ENCODE measurements at regions of chr9 and their contacts with region 1.

Region 1: DNA sequence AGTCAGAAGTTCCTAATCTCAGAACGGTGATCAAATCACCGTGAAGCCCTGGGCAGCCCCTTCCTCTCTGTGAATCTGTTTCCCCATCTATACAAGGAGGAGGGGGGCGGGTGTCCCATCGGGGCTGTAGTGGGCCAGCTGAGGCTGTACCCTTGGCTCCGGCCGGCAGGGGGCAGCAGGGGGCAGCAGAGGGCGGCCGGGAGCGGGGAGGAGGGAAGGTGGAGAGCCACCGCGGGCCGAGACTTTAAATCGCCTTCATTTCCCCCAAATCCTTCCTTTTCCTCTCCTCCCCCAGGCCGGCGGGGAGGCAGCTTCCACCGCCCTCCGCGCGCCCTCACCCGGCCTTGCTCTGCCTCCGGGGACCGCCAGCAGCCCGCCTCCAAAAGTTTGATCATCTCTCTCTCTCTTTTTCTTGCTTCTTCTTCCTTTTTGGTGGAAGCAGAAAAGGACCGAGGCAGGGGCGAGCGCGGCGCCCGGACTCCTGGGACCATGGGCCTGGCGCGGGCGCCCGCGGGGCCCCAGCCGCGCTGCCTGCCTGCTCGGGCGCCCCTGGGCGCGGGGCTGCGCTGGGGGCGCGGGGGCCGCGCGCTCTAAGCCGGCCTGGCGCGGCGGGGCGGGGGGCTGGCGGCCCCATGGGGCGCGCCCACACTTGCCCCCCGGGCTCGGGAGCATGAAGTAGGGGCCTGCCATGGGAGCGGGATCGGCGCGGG is at the start of gene COL27A1:
- DNase-seq: peak; percentile 71
- H3K4me3 Mint-ChIP-seq: peak within 1 kb of the TSS; percentile 87
- H3K27ac Mint-ChIP-seq: peak within 1 kb of the TSS; percentile 74
- H3K4me1 Mint-ChIP-seq: peaks cover 16% of the 10 kb centered on the region
- H3K27me3 Mint-ChIP-seq: peaks cover 49% of the 10 kb centered on the region
- total RNA-seq, gene COL27A1: 6.1 and 7.4 TPM in 2 replicates

Region 2: GRCh38 chr9:113957821-113958341 is 197.5 kb before region 1 on chr9:
- intact Hi-C with region 1: no loop called
- DNase-seq: no peak
- H3K4me3 Mint-ChIP-seq: no peak overlapping the region
- H3K27ac Mint-ChIP-seq: no peak overlapping the region
- H3K4me1 Mint-ChIP-seq: no peaks in the 10 kb centered on the region
- H3K27me3 Mint-ChIP-seq: peaks cover 5% of the 10 kb centered on the region

Region 3: GRCh38 chr9:113993838-113994540 is 161.4 kb before region 1 on chr9:
- intact Hi-C with region 1: no loop called
- DNase-seq: no peak
- H3K4me3 Mint-ChIP-seq: no peak overlapping the region
- H3K27ac Mint-ChIP-seq: no peak overlapping the region
- H3K4me1 Mint-ChIP-seq: no peaks in the 10 kb centered on the region
- H3K27me3 Mint-ChIP-seq: peaks cover 4% of the 10 kb centered on the region

Region 4: GRCh38 chr9:114108016-114108833 is 47.2 kb before region 1 on chr9:
- intact Hi-C with region 1: loop called (anchors 1 kb)
- DNase-seq: peak; percentile 42
- H3K4me3 Mint-ChIP-seq: no peak overlapping the region
- H3K27ac Mint-ChIP-seq: no peak overlapping the region
- H3K4me1 Mint-ChIP-seq: no peaks in the 10 kb centered on the region
- H3K27me3 Mint-ChIP-seq: peaks cover 28% of the 10 kb centered on the region

Region 5: GRCh38 chr9:114291064-114291474 is 135.7 kb after region 1 on chr9:
- intact Hi-C with region 1: loop called (anchors 1 kb)
- DNase-seq: peak; percentile 52
- H3K4me3 Mint-ChIP-seq: no peak overlapping the region
- H3K27ac Mint-ChIP-seq: no peak overlapping the region
- H3K4me1 Mint-ChIP-seq: no peaks in the 10 kb centered on the region
- H3K27me3 Mint-ChIP-seq: peaks cover 4% of the 10 kb centered on the region

Region 6: GRCh38 chr9:114505187-114506081 is 350.0 kb after region 1 on chr9 and contains the start of gene WHRN:
- intact Hi-C with region 1: loop called (anchors 10 kb)
- DNase-seq: peak; percentile 89
- H3K4me3 Mint-ChIP-seq: peak within 1 kb of the TSS; percentile 85
- H3K27ac Mint-ChIP-seq: peak within 1 kb of the TSS; percentile 79
- H3K4me1 Mint-ChIP-seq: peaks cover 19% of the 10 kb centered on the region
- H3K27me3 Mint-ChIP-seq: peaks cover 62% of the 10 kb centered on the region
- total RNA-seq, gene WHRN: 2.2 and 2.4 TPM in 2 replicates